ENCODE measurements at regions of chrX and their contacts with region 1.

Region 1: GRCh38 chrX:136397001-136397400 is 90.7 kb upstream of the BRS3 start:
- DNase-seq: no peak
- ATAC-seq: no peak
- H3K4me3 ChIP-seq: no peak overlapping the region
- H3K27ac ChIP-seq: no peak overlapping the region
- H3K4me1 ChIP-seq: no peaks in the 10 kb centered on the region
- H3K27me3 ChIP-seq: peaks cover 0 to 10% (median 0%) of the 10 kb centered on the region in 7 donors
- CTCF ChIP-seq: peak in 1 of 9 donors; percentile 7

Region 2: DNA sequence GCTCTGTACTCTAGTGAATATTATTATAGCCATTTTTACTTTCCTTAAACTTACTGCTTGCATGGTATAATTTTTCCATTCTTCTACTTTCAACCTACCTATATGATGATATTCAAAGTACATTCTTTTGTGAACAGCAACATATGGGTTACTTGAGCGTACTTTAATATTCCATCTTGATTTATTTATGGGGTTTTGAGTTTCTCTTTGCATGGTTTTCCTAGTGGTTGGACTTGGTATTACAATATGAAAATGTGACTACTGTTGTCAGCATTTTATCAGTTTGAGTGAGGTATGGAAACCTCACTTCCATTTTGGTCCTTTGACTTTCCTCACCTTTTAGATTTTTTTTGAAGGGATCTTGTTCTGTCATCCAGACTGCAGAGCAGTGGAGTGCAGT is 60.4 kb before region 1 on chrX:
- intact Hi-C with region 1: loop called in 1 of 10 experiments (anchors 10 kb)
- DNase-seq: no peak
- ATAC-seq: no peak
- H3K4me3 ChIP-seq: no peak overlapping the region
- H3K27ac ChIP-seq: no peak overlapping the region
- H3K4me1 ChIP-seq: no peaks in the 10 kb centered on the region
- H3K27me3 ChIP-seq: peaks cover 0 to 17% (median 0%) of the 10 kb centered on the region in 7 donors
- CTCF ChIP-seq: peak in 3 of 9 donors; percentile 12 to 56 (median 28)

Measured in heart right ventricle (tissue), 16 donors.